K562 (cell line): ENCODE measurements at regions of chr5 and their contacts with region 1.

Region 1: DNA sequence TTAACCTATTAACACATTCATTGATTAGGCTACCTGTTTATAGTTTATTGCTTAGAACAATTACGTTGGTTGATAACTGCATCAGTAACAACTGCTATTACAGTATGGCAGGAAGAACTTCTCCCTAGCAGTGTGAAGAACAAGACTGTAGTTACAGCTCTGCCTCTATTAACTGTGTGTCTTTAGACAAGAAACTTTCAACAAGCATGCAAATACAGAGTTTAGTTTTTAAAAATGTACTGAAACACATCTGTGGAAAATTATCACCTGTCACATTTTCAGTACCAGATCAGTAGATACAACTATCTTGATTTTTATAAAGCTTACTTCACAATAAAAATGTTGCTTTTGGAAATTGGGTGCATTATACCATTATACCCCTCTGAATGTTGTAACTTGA is 22.2 kb downstream of the ELL2 start:
- DNase-seq: no peak
- ATAC-seq: no peak
- H3K4me3 ChIP-seq: no peak overlapping the region
- H3K27ac ChIP-seq: no peak overlapping the region
- H3K4me1 ChIP-seq: peaks cover 9 to 60% of the 10 kb centered on the region in 2 experiments
- H3K27me3 ChIP-seq: no peaks in the 10 kb centered on the region
- CTCF ChIP-seq: no peak
- EP300 ChIP-seq: no peak
- POLR2A ChIP-seq: no peak
- RAD21 ChIP-seq: no peak

Region 2: DNA sequence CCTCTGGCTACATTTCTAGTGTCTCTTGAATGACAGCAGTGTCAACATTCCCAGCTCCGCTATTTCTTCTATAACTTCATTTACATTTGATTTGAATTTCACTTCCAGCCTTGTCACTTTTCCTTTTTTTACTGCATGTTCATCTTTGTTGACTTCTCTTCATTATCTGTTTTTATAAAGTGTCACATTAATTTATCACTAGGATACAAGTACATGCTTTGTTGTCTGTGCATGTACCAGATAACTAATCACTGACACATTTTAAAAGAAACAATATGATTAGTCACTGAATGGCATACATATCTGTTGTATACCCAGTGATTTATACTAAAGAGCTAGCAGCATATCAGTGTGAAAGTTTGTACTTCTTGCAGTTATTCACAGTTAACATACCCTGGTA is 355.5 kb before region 1 on chr5:
- CTCF ChIA-PET with region 1: no interaction called
- POLR2A ChIA-PET with region 1: no interaction called
- in situ Hi-C with region 1: no loop called
- intact Hi-C with region 1: no loop called
- DNase-seq: no peak
- ATAC-seq: no peak
- H3K4me3 ChIP-seq: no peak overlapping the region
- H3K27ac ChIP-seq: no peak overlapping the region
- H3K4me1 ChIP-seq: no peaks in the 10 kb centered on the region
- H3K27me3 ChIP-seq: no peaks in the 10 kb centered on the region
- CTCF ChIP-seq: no peak
- EP300 ChIP-seq: no peak; the same call in 1 of the 2 replicates
- POLR2A ChIP-seq: no peak
- RAD21 ChIP-seq: no peak

Region 3: GRCh38 chr5:95924720-95925377 is 14.6 kb before region 1 on chr5:
- CTCF ChIA-PET with region 1: interaction called, 3 read pairs
- POLR2A ChIA-PET with region 1: interaction called, 12 read pairs
- in situ Hi-C with region 1: no loop called
- intact Hi-C with region 1: no loop called
- DNase-seq: peak in 1 of 4 experiments; percentile 41
- ATAC-seq: peak; percentile 68
- H3K4me3 ChIP-seq: no peak overlapping the region
- H3K27ac ChIP-seq: no peak overlapping the region; the same call in 1 of the 3 replicates
- H3K4me1 ChIP-seq: peaks cover 10 to 43% of the 10 kb centered on the region in 2 experiments
- H3K27me3 ChIP-seq: no peaks in the 10 kb centered on the region
- CTCF ChIP-seq: no peak
- EP300 ChIP-seq: no peak
- POLR2A ChIP-seq: no peak
- RAD21 ChIP-seq: no peak

Region 4: GRCh38 chr5:96054311-96055030 is 115.0 kb after region 1 on chr5:
- CTCF ChIA-PET with region 1: no interaction called
- POLR2A ChIA-PET with region 1: no interaction called
- in situ Hi-C with region 1: no loop called
- intact Hi-C with region 1: no loop called
- DNase-seq: no peak
- ATAC-seq: no peak
- H3K4me3 ChIP-seq: no peak overlapping the region
- H3K27ac ChIP-seq: no peak overlapping the region
- H3K4me1 ChIP-seq: no peaks in the 10 kb centered on the region; a peak in 1 of 5 replicates
- H3K27me3 ChIP-seq: peaks cover 0 to 3% of the 10 kb centered on the region in 2 experiments; a peak in 1 of 5 replicates
- CTCF ChIP-seq: no peak
- EP300 ChIP-seq: no peak
- POLR2A ChIP-seq: no peak
- RAD21 ChIP-seq: no peak

Region 5: DNA sequence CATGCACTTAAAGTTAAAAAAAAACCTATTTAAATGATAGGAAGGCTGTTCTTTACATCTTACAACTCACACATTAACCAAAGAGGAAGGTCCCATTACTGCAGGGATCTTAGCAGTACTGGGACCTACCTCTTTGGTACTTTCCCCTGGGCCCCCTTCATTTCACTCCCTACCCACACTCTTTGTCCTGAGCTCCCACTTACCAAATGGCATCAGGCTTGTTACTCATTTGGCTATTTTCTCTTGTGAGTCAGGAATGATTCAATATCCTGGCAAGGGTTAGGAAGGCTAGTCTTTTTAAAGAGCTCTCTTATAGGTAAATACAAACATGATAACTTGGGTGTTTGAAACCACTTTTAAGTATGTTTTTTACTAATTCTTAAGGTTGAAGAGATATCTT is 139.6 kb after region 1 on chr5:
- CTCF ChIA-PET with region 1: no interaction called
- POLR2A ChIA-PET with region 1: no interaction called
- in situ Hi-C with region 1: no loop called
- intact Hi-C with region 1: no loop called
- DNase-seq: no peak
- ATAC-seq: no peak
- H3K4me3 ChIP-seq: no peak overlapping the region
- H3K27ac ChIP-seq: no peak overlapping the region
- H3K4me1 ChIP-seq: peaks cover 0 to 8% of the 10 kb centered on the region in 2 experiments; a peak in 2 of 5 replicates
- H3K27me3 ChIP-seq: no peaks in the 10 kb centered on the region
- CTCF ChIP-seq: no peak
- EP300 ChIP-seq: no peak
- POLR2A ChIP-seq: no peak
- RAD21 ChIP-seq: no peak